CD14-positive monocyte (primary cell): ENCODE measurements at regions of chr19 and their contacts with region 1.

Region 1: DNA sequence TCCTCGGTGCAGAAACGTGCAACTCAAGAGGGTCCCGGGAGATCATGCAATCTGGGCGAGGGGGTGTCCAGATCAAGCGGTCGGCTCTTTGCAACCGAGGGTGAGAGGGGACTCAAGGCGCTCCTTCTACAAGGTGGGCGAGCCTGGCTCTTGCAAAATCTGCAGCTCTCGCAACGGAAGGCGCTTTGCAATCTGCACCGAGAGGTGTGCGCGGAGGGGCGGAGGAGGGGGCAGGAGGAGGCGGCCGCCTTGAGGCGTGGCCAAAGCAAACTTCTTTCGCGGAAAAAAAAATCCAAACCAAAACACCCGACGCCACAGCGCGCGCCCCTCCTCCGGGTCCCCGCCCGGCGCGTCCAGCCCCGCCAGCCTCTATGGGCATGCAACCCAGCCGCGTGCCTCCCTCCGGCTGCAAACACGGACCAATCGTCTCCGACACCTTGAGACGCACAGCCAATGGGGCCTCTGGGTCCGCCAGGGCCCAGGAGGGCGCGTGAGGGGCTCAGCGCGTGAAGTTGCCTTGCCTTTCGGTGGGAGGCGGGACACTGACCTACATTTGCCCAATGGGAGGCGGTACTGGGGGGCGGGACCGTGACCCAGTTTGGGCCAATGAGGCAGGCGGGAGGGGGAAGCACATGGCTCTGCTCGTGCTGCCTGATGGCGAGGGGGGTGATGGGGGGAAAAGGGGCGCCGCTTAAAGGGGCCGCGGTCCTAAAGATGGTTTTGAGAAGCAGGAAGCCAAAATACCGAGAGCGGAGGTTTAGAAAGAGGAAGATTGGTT is at the start of gene DBP:
- DNase-seq: peak; percentile 97 to 99 (median 98)
- H3K4me3 ChIP-seq: peak within 1 kb of the TSS; percentile 70 to 86 (median 84)
- H3K4me3 Mint-ChIP-seq: peak within 1 kb of the TSS; percentile 98 to 99
- H3K27ac ChIP-seq: peak within 1 kb of the TSS; percentile 95 to 96
- H3K27ac Mint-ChIP-seq: peak within 1 kb of the TSS; percentile 96 to 99 (median 99)
- H3K4me1 ChIP-seq: peaks cover 48 to 74% of the 10 kb centered on the region in 2 donors
- H3K4me1 Mint-ChIP-seq: peaks cover 51% of the 10 kb centered on the region
- H3K27me3 ChIP-seq: no peaks in the 10 kb centered on the region
- H3K27me3 Mint-ChIP-seq: peaks cover 2 to 9% (median 9%) of the 10 kb centered on the region in 3 donors
- CTCF ChIP-seq: no peak
- polyA plus RNA-seq, gene DBP: 12.8 to 22.3 (median 17.5) TPM

Region 2: GRCh38 chr19:48354332-48354992 is 282.9 kb before region 1 on chr19:
- intact Hi-C with region 1: no loop called
- DNase-seq: no peak
- H3K4me3 ChIP-seq: no peak overlapping the region
- H3K4me3 Mint-ChIP-seq: no peak overlapping the region
- H3K27ac ChIP-seq: no peak overlapping the region
- H3K27ac Mint-ChIP-seq: no peak overlapping the region
- H3K4me1 ChIP-seq: no peaks in the 10 kb centered on the region
- H3K4me1 Mint-ChIP-seq: no peaks in the 10 kb centered on the region
- H3K27me3 ChIP-seq: no peaks in the 10 kb centered on the region
- H3K27me3 Mint-ChIP-seq: peaks cover 0 to 3% (median 0%) of the 10 kb centered on the region in 3 donors
- CTCF ChIP-seq: no peak

Region 3: DNA sequence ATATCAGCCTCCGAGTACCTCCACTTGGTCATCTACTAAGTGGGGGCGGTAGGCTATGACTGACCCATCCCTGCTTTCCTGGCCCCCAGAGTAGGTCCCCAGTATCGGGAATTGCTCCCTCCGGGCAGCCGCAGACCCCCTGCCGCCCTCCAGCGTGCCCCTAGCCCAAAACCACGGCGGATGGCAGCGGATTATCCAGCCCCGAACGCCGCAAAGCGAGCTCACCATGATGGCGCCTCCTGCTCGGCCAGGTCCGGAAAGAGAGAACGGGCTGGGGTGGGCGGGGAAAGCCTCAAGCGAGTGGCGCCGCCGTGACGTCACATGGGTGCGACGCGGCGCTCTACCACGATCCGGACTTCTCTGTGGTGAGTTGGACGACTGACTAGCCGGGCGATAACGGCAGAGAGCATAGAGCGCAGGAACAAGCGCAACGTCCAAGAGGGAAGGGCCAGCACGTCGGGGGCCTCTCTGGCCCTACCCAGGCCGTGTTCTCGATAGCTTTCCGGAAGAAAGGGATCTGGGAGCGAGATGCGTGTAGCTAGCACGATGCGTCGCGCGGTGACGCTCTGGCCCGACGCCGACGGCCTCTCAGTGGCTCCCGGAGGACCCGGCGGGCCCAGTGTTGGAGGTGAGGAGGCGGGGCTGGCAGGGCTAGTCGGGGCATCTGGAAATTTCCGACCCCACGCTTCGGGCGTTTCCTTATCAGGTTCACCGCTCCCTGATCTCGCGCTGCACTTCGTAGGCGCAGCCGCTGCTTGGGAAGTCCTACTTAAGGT is 18.3 kb before region 1 on chr19 and contains the starts of genes RPL18 and SPHK2:
- intact Hi-C with region 1: loop called (anchors 2 kb)
- DNase-seq: peak; percentile 97 to 99 (median 98)
- H3K4me3 ChIP-seq: peak within 1 kb of the TSS; percentile 93 to 99 (median 96)
- H3K4me3 Mint-ChIP-seq: peak within 1 kb of the TSS; percentile 94 to 97
- H3K27ac ChIP-seq: peak within 1 kb of the TSS; percentile 82 to 93
- H3K27ac Mint-ChIP-seq: peak within 1 kb of the TSS; percentile 95 to 99 (median 98)
- H3K4me1 ChIP-seq: peaks cover 63 to 70% of the 10 kb centered on the region in 2 donors
- H3K4me1 Mint-ChIP-seq: peaks cover 57% of the 10 kb centered on the region
- H3K27me3 ChIP-seq: no peaks in the 10 kb centered on the region
- H3K27me3 Mint-ChIP-seq: no peaks in the 10 kb centered on the region
- CTCF ChIP-seq: no peak
- polyA plus RNA-seq, gene RPL18: 803 to 1,540 (median 892) TPM
- polyA plus RNA-seq, gene SPHK2: 8.5 to 9.4 (median 9.1) TPM

Region 4: GRCh38 chr19:48819366-48819816 is 182.0 kb after region 1 on chr19:
- intact Hi-C with region 1: no loop called
- DNase-seq: no peak
- H3K4me3 ChIP-seq: no peak overlapping the region
- H3K4me3 Mint-ChIP-seq: no peak overlapping the region
- H3K27ac ChIP-seq: no peak overlapping the region
- H3K27ac Mint-ChIP-seq: peak overlapping the region in 1 of 7 donors; percentile 31
- H3K4me1 ChIP-seq: no peaks in the 10 kb centered on the region
- H3K4me1 Mint-ChIP-seq: no peaks in the 10 kb centered on the region
- H3K27me3 ChIP-seq: no peaks in the 10 kb centered on the region
- H3K27me3 Mint-ChIP-seq: peaks cover 2 to 4% (median 3%) of the 10 kb centered on the region in 3 donors
- CTCF ChIP-seq: no peak

Region 5: DNA sequence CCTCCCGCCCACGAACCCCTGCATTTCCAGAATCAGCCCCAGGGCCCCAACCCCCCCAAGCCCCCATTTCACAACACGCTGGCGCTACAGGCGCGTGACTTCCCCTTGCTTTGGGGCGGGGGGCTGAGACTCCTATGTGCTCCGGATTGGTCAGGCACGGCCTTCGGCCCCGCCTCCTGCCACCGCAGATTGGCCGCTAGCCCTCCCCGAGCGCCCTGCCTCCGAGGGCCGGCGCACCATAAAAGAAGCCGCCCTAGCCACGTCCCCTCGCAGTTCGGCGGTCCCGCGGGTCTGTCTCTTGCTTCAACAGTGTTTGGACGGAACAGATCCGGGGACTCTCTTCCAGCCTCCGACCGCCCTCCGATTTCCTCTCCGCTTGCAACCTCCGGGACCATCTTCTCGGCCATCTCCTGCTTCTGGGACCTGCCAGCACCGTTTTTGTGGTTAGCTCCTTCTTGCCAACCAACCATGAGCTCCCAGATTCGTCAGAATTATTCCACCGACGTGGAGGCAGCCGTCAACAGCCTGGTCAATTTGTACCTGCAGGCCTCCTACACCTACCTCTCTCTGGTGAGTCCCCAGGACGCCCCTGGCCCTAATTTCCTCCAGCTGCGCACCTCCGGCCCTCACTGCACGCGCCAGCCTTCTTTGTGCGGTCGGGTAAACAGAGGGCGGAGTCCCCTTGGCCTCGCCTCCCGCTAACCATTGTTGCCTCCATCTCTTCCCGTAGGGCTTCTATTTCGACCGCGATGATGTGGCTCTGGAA is 327.9 kb after region 1 on chr19 and contains the start of gene FTL:
- intact Hi-C with region 1: loop called (anchors 5 to 10 kb)
- DNase-seq: peak; percentile 98 to 99 (median 99)
- H3K4me3 ChIP-seq: peak within 1 kb of the TSS; percentile 86 to 99 (median 89)
- H3K4me3 Mint-ChIP-seq: peak within 1 kb of the TSS; percentile 99 to 100
- H3K27ac ChIP-seq: peak within 1 kb of the TSS; percentile 88 to 96
- H3K27ac Mint-ChIP-seq: peak within 1 kb of the TSS; percentile 95 to 99 (median 97)
- H3K4me1 ChIP-seq: peaks cover 74 to 81% of the 10 kb centered on the region in 2 donors
- H3K4me1 Mint-ChIP-seq: peaks cover 68% of the 10 kb centered on the region
- H3K27me3 ChIP-seq: no peaks in the 10 kb centered on the region
- H3K27me3 Mint-ChIP-seq: peaks cover 0 to 14% (median 0%) of the 10 kb centered on the region in 3 donors
- CTCF ChIP-seq: no peak
- polyA plus RNA-seq, gene FTL: 4,468 to 26,681 (median 23,650) TPM